T-cell (primary cell): ENCODE measurements at regions of chr7 and their contacts with region 1.

Region 1: DNA sequence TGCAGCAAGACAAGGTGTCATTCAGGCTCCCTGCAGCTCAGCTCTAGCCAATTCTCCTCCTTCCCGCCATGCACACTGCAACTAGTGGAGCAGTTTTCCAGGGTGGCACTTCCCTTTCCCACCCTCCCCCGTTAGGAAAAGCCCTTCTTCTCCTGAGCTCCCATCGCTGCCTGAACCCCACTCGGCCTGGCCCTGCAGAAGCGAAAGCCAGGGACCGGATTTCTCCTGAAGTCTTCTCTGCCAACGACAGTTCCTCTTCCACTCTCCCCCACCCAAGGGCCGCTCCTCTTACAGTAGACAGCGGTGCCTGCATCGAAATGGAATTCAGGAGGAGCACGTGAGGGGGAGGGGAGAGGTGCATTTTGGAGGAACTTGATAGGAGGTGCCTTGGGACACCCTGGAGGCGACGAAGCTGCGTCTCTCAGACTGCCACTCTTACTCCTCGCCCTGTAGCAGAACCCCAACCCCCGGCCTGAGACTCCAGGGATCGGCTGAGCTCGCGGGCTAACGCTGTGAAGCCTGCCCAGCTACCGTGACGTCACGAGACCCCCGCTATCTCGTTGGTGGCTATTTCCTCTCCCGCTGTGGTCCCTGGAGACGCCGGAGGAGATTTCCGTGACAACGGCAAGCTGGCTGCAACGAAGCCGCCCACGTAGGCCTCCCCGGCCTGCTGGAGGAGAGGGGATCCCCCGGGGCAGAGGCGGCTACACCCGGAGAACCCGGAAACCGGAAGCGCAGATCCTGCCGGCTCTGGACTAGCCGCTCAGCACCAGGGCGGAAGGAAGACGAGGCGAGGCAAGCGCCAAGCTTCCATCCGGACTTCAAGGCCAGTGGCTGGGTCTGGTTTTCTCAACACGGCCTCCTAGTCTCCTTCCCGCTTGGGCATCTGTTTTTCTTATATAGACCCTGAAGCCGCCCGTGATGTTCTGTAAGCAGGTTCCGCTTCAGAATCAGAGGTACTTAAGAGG is 109.7 kb downstream of the RALA start:
- DNase-seq: peak; percentile 77 to 97 (median 93)
- ATAC-seq: peak; percentile 88 to 96 (median 94)
- H3K4me3 ChIP-seq: peak overlapping the region; percentile 71 to 76
- H3K4me3 Mint-ChIP-seq: peak overlapping the region; percentile 91 to 95 (median 93)
- H3K27ac ChIP-seq: peak overlapping the region; percentile 83
- H3K27ac Mint-ChIP-seq: peak overlapping the region; percentile 96 to 98
- H3K4me1 ChIP-seq: peaks cover 7 to 39% of the 10 kb centered on the region in 2 experiments
- H3K4me1 Mint-ChIP-seq: peaks cover 35 to 49% (median 42%) of the 10 kb centered on the region in 3 donors
- H3K27me3 ChIP-seq: no peaks in the 10 kb centered on the region
- H3K27me3 Mint-ChIP-seq: no peaks in the 10 kb centered on the region

Region 2: DNA sequence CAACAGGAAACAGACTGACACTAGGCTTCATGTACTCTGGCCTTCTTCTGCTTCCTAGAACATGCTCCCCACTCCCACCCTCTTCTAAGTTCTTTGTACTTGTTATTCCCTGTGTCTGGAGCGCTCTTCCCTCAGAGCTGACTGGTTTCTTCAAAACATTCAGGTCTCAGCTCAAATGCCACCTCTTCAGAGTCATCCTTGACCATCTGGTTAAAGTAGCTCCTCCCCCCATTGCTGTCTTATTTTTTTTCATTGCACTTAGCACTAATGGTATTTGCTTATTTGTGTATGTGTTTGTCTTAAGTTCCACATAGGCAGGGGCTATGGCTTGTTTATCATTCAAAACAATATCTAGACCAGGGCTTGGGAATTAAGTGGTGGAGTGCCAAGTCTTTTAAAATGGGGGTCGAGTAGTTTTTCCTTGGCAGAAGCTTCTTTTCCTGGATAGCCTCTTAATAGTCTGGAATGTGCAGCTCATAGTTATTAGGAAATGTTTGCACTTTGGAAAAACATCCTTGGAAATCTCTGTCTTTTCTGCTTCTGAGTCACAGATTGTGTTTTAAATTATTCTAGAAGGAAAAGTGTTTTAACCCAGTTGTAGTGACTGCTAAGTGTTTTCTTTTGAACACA is 49.8 kb before region 1 on chr7:
- CTCF ChIA-PET with region 1: no interaction called
- POLR2A ChIA-PET with region 1: no interaction called
- DNase-seq: no peak
- ATAC-seq: no peak
- H3K4me3 ChIP-seq: no peak overlapping the region
- H3K4me3 Mint-ChIP-seq: no peak overlapping the region
- H3K27ac ChIP-seq: no peak overlapping the region
- H3K27ac Mint-ChIP-seq: no peak overlapping the region
- H3K4me1 ChIP-seq: peaks cover 0 to 7% of the 10 kb centered on the region in 2 experiments
- H3K4me1 Mint-ChIP-seq: peaks cover 42 to 52% (median 48%) of the 10 kb centered on the region in 3 donors
- H3K27me3 ChIP-seq: no peaks in the 10 kb centered on the region
- H3K27me3 Mint-ChIP-seq: no peaks in the 10 kb centered on the region

Region 3: GRCh38 chr7:39746103-39746819 is 13.1 kb after region 1 on chr7:
- CTCF ChIA-PET with region 1: interaction called, 9 to 11 read pairs
- POLR2A ChIA-PET with region 1: no interaction called
- DNase-seq: peak in 34 of 35 experiments; percentile 12 to 76 (median 43)
- ATAC-seq: peak in 3 of 4 experiments; percentile 67 to 70 (median 70)
- H3K4me3 ChIP-seq: no peak overlapping the region
- H3K4me3 Mint-ChIP-seq: no peak overlapping the region
- H3K27ac ChIP-seq: no peak overlapping the region
- H3K27ac Mint-ChIP-seq: peak overlapping the region in 1 of 2 donors; percentile 49
- H3K4me1 ChIP-seq: peaks cover 0 to 3% of the 10 kb centered on the region in 2 experiments
- H3K4me1 Mint-ChIP-seq: peaks cover 6 to 7% (median 6%) of the 10 kb centered on the region in 3 donors
- H3K27me3 ChIP-seq: no peaks in the 10 kb centered on the region
- H3K27me3 Mint-ChIP-seq: no peaks in the 10 kb centered on the region